Activated CD4-positive, alpha-beta memory T cell treated with anti-CD3 and anti-CD28 coated beads, Interleukin-2, amount 10 ng/mL, durations not matched to agents 7 days and 5 days (primary cell): ENCODE measurements at regions of chr6 and their contacts with region 1.

Region 1: DNA sequence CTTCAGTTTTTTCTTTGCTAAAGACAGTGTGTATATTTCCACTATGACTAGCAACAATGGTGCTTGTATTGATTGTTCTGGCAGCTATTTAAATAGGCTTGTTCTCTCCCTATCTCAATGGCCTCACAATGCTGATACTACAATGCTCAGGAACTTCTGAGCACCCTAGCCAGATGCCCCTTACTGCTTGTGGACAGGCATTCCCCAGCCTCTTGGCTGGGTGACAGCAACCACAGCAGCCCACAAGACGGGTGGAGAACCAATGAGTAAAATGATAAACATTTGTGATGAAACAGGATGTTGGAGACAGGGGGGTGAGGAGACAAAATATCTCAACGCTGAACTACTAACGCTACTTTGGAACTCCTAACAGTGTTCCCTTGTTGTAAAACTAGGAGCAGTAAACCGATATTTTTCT is 42.3 kb downstream of the HIVEP2 start:
- DNase-seq: peak; percentile 80
- H3K4me3 Mint-ChIP-seq: peak overlapping the region; percentile 58
- H3K27ac Mint-ChIP-seq: peak overlapping the region; percentile 93
- H3K4me1 Mint-ChIP-seq: peaks cover 51% of the 10 kb centered on the region
- H3K27me3 Mint-ChIP-seq: no peaks in the 10 kb centered on the region

Region 2: DNA sequence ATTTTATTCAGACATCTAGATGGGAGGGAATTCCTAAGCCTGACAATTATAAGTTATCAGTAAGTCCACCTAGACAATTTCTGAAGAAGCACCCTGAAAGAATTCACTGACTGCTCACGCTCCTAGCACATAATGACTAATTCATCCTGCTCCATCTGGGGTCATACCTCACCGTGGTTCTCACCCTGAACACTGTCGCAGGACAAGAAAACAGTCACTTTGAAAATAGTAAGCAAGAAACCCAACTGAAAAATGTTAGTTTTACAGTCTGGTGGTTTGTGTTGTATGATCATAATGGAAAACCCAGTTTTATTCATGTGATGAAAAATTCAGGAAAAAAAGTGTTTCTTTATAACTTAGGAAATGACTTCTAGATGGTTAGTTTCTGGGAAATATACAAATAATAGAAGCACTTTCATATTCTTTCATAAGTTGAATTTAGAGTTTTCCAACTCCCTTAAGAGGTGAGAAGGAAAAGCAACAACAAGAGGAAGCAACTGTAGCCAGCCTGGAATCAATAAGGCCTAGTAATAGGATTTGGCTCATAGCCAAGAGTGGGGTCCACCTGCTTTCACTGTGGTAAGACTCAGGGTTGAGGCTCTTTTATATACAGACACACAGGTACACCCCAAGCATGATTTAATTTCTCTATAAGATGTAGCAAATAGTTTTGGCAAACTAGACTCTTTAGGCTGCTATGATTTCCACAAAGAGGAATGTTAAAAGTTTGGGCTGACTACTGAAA is 51.8 kb before region 1 on chr6:
- CTCF ChIA-PET with region 1: interaction called, 5 read pairs
- POLR2A ChIA-PET with region 1: interaction called, 31 read pairs
- DNase-seq: peak; percentile 52
- H3K4me3 Mint-ChIP-seq: peak overlapping the region; percentile 4
- H3K27ac Mint-ChIP-seq: peak overlapping the region; percentile 44
- H3K4me1 Mint-ChIP-seq: peaks cover 93% of the 10 kb centered on the region
- H3K27me3 Mint-ChIP-seq: no peaks in the 10 kb centered on the region

Region 3: DNA sequence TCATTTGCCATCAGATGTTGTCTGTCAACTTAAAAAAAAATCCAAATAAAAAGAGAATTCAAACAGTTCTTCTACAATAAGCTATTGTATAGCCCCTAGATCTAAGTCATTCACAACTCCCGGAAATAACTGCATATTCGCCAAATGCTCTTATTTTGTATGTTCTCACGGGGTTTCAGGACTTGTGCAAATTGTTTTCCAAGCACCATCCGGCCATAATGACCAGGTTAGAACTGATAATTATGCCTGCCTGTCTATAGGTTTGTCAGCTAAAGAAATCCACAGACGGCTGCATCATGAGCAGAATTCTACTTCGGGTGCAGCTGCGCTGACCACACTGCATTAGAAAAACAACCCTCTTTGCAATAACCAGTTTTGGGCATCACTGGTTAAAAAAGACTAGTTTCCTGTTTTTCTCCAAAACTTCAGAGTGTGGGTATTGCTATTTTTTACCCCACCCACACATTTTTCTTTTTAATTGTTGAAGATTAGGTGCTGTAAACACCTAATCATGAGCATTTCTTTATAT is 45.3 kb before region 1 on chr6:
- CTCF ChIA-PET with region 1: interaction called, 3 read pairs
- POLR2A ChIA-PET with region 1: interaction called, 31 read pairs
- DNase-seq: no peak
- H3K4me3 Mint-ChIP-seq: peak overlapping the region; percentile 69
- H3K27ac Mint-ChIP-seq: peak overlapping the region; percentile 98
- H3K4me1 Mint-ChIP-seq: peaks cover 82% of the 10 kb centered on the region
- H3K27me3 Mint-ChIP-seq: no peaks in the 10 kb centered on the region

Region 4: GRCh38 chr6:142913511-142914047 is 10.9 kb after region 1 on chr6:
- CTCF ChIA-PET with region 1: interaction called, 7 read pairs
- POLR2A ChIA-PET with region 1: interaction called, 16 read pairs
- DNase-seq: peak; percentile 81
- H3K4me3 Mint-ChIP-seq: peak overlapping the region; percentile 75
- H3K27ac Mint-ChIP-seq: peak overlapping the region; percentile 99
- H3K4me1 Mint-ChIP-seq: peaks cover 67% of the 10 kb centered on the region
- H3K27me3 Mint-ChIP-seq: no peaks in the 10 kb centered on the region

Region 5: DNA sequence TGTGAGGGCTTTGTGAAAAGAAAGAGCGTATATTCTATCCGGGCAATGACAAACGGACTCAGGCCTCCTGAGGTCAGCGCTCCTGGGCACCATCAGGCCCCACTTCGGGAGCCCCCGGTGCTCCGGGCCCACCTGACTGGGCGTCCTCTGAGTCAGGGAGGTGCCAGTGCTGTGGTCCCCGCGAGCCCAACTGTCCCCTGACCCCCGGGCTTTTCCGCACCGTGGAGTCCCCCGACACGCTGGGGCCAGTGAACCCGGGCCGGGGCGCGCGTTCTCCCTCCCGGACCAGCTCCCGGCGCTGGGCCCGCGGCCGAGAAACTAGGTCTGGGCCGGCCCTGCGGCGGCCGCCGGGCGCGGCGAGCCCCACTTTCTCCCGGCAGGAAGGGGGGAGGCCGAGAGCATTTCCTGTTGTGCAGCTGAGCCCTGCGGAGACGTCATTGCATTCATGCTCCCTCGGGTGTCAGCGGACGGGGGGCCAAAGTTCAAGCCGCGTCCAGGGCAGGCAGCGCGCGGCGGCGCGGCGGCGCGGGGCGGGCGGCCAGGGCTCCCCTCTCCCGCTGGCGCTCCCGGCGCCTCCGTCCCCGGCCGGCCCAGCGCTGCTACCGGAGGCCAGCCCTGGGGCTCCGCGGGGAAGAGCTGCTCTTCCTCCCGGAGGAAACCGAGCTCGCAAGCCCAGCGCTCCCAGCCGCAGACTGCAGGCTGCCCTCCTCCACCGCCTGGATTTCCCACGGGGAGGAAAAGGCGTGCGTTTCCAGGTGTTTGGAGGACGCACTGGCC is 24.0 kb after region 1 on chr6:
- CTCF ChIA-PET with region 1: interaction called, 3 read pairs
- POLR2A ChIA-PET with region 1: interaction called, 131 read pairs
- DNase-seq: peak; percentile 82
- H3K4me3 Mint-ChIP-seq: peak overlapping the region; percentile 84
- H3K27ac Mint-ChIP-seq: peak overlapping the region; percentile 87
- H3K4me1 Mint-ChIP-seq: peaks cover 42% of the 10 kb centered on the region
- H3K27me3 Mint-ChIP-seq: no peaks in the 10 kb centered on the region

Region 6: DNA sequence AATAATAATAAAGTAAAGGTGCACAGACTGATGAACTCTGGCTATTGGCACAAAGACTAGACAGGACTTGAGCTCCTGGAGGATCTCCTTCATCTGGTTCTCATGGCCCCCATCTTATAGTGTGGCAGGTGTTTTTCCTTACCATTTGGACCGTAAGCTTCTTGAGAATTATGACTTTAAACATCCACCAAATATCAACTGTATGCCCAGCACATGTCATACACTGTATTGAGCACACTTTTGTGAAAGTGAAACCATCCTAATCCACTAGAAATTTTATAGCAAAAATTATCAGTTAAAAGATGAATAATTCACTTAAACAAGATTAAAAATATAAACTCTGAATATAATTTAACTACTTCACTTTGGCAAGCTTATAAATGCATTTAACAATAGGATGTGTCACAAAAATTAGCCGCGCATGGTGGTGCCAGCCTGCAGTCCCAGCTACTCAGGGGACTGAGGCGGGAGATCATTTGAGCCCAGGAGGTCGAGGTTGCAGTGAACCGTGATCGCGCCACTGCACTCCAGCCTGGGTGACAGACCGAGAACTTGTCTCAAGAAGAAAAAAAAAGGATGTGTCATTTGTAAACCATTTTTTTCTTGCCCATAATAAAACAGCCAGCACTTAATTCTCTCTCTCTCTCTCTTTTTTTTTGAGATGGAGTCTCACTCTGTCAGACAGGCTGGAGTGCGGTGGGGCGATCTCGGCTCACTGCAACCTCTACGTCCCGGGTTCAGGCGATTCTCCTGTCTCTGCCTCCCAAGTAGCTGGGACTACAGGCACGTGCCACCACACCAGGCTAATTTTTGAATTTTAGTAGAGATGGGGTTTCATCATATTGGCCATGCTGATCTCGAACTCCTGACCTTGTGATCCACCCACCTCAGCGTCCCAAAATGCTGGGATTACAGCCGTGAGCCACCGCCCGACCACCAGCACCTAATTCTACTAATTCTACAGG is 33.2 kb after region 1 on chr6:
- CTCF ChIA-PET with region 1: interaction called, 3 read pairs
- POLR2A ChIA-PET with region 1: interaction called, 142 read pairs
- DNase-seq: peak; percentile 40
- H3K4me3 Mint-ChIP-seq: peak overlapping the region; percentile 80
- H3K27ac Mint-ChIP-seq: peak overlapping the region; percentile 87
- H3K4me1 Mint-ChIP-seq: peaks cover 81% of the 10 kb centered on the region
- H3K27me3 Mint-ChIP-seq: no peaks in the 10 kb centered on the region

Region 7: GRCh38 chr6:142952614-142953013 is 50.0 kb after region 1 on chr6:
- CTCF ChIA-PET with region 1: no interaction called
- POLR2A ChIA-PET with region 1: no interaction called
- DNase-seq: no peak
- H3K4me3 Mint-ChIP-seq: no peak overlapping the region
- H3K27ac Mint-ChIP-seq: no peak overlapping the region
- H3K4me1 Mint-ChIP-seq: peaks cover 10% of the 10 kb centered on the region
- H3K27me3 Mint-ChIP-seq: no peaks in the 10 kb centered on the region

Region 8: DNA sequence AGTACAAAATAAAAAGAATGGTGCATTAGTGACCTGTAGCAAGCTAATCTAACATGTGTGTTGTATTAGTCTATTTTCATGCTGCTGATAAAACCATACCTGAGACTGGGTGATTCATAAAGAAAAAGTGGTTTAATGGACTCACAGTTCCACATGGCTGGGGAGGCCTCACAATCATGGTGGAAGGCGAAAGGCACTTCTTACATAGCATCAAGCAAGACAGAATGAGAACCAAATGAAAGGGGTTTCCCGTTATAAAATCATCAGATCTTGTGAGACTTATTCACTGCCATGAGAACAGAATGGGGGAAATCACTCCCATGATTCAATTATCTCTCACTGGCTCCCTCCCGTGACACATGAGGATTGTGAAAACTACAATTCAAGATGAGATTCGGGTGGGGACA is 112.7 kb after region 1 on chr6:
- CTCF ChIA-PET with region 1: no interaction called
- POLR2A ChIA-PET with region 1: no interaction called
- DNase-seq: no peak
- H3K4me3 Mint-ChIP-seq: no peak overlapping the region
- H3K27ac Mint-ChIP-seq: no peak overlapping the region
- H3K4me1 Mint-ChIP-seq: no peaks in the 10 kb centered on the region
- H3K27me3 Mint-ChIP-seq: peaks cover 4% of the 10 kb centered on the region

Region 9: DNA sequence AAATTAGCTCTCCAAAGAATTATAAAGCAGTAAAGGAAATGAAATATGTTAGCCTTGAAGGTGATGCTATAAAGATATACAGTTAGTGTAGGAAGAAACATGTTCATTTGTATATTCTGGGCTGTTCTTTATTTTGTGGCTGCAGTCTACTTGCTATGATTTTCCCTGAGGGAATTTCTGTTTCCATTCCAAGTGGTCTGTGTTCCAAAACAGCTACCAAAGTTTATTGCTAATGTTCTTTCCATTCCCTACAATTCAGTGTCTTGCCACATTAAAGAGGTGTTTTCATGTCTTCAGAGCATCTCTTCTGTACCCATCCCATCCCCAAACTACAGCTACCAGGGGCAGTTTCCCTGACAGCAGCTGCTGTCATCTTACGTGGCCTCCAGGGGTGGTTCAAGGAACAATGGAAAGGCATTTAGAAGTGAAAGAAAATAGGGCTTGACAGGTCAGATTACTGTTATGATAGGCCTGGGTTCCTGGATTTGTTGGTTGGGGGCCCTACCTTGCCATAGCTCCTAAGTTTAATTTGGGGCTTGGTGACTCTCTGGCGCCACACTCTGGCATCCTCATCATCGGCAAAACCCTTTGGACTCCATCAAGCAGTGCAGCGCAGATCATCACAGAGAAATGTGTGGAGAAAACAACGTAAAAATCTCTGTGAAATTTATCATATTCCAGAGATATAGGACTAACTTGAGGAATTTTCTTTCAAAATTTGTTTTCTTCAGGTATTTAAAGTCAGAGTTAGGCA is 124.2 kb after region 1 on chr6:
- CTCF ChIA-PET with region 1: no interaction called
- POLR2A ChIA-PET with region 1: no interaction called
- DNase-seq: peak; percentile 53
- H3K4me3 Mint-ChIP-seq: no peak overlapping the region
- H3K27ac Mint-ChIP-seq: no peak overlapping the region
- H3K4me1 Mint-ChIP-seq: no peaks in the 10 kb centered on the region
- H3K27me3 Mint-ChIP-seq: peaks cover 1% of the 10 kb centered on the region

Region 10: DNA sequence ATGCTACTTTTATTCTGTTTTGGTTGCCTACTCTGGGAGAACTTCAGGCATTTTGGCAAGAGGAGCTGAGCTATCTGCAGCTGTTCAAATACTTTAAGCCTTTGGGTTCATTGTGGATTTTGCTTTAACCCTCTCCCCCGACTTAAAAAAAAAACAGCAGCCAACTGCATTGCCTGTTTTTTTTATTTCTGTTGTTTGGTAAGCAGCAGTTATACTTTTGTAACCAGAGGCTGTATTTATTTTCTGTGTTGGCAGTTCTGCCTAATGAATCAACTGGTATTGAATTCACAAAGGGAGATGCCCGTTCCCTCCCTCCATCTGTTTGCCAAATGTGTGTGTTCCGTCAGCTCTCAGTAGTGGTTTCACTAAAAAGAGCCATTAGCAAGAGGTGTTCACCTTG is 1866.5 kb after region 1 on chr6:
- CTCF ChIA-PET with region 1: no interaction called
- POLR2A ChIA-PET with region 1: no interaction called
- DNase-seq: no peak
- H3K4me3 Mint-ChIP-seq: no peak overlapping the region
- H3K27ac Mint-ChIP-seq: no peak overlapping the region
- H3K4me1 Mint-ChIP-seq: no peaks in the 10 kb centered on the region
- H3K27me3 Mint-ChIP-seq: no peaks in the 10 kb centered on the region